Activated naive CD8-positive, alpha-beta T cell treated with anti-CD3 and anti-CD28 coated beads, Interleukin-2, amount 10 ng/mL, durations not matched to agents 7 days and 5 days (primary cell): ENCODE measurements at regions of chrX and their contacts with region 1.

Region 1: DNA sequence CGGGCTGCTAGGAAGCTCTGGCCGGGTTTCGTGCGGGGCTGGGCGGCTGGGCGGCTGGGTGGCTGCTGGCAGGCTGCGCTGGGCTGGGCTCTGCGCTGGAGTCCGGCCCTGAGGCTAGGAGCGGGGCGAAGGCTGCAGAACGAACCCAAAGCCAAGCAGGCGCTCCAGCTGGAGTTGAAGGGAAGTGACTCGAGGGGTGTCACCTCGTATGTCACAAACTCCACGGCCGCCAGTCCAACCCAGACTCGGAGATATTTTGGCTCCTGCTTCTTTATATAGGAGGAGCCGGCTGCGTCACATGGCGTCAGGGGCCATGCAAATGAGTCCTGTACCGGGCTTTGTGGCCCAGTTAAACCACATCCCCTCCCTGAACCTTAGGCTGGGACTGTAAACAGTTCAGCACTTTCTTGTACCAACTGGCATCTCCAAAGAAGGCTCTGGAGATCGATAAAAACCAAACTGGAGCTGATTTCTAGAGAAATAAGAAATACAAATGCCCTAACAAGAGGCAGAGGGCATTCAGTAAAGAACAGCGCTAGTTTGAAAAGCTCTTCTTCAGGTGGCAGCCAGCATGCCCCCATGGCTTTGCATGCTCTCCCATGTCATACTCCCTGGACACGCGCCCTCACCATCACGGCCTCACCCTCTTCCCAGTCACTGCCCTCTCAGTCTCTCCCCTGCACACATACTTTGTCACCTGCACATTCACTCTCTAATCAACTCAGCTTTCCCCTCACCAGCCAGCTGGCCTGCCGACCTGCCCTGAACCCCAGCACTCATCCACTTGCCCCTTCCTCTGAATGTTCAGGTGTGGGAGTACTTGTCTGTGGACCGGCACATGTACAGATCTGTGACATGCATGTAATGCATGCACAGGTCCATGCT is 58.5 kb downstream of the TSC22D3 start:
- DNase-seq: peak; percentile 81
- ATAC-seq: peak; percentile 81
- H3K4me3 Mint-ChIP-seq: peak overlapping the region; percentile 92
- H3K27ac Mint-ChIP-seq: peak overlapping the region; percentile 89
- H3K4me1 Mint-ChIP-seq: peaks cover 25% of the 10 kb centered on the region
- H3K27me3 Mint-ChIP-seq: no peaks in the 10 kb centered on the region

Region 2: DNA sequence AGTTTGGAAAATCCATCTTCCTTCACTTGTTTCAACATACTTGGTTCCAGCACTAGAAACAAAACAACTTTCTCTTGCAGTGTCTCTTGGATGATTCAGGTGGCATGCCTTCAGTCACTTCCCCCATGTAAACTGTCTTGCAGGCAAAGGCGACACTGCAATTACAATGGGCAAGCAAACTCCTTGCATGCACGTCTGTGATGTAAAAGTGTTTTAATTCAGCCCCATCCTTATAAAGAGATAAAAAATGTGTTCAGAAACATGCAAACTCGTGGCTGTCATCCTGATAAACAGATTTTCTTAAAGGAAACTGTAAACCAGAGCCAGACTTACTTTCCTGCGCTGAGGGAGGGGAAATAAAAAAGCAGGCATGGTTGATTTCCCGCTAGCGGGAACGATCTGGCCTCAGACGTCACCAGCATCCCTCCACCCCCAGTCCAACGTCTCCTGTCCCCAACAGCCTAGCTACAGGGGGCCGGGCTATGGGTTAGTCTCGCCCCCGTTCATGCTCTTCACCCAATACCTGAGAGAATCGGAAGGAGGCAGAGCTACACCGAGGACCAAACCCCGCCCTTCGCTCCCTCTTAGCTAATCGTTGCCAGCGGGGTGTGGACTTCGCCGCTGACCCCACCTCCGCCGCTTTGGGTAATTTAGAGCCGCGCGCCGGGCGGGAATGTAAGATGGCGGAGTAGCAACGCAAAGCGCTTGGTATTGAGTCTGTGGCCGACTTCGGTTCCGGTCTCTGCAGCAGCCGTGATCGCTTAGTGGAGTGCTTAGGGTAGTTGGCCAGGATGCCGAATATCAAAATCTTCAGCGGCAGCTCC is 89.0 kb before region 1 on chrX and contains the start of gene PRPS1:
- POLR2A ChIA-PET with region 1: interaction called, 14 read pairs
- DNase-seq: peak; percentile 82
- ATAC-seq: peak; percentile 99
- H3K4me3 Mint-ChIP-seq: peak within 1 kb of the TSS; percentile 91
- H3K27ac Mint-ChIP-seq: peak within 1 kb of the TSS; percentile 90
- H3K4me1 Mint-ChIP-seq: peaks cover 17% of the 10 kb centered on the region
- H3K27me3 Mint-ChIP-seq: no peaks in the 10 kb centered on the region
- total RNA-seq, gene PRPS1: 62.0 to 69.2 TPM

Region 3: DNA sequence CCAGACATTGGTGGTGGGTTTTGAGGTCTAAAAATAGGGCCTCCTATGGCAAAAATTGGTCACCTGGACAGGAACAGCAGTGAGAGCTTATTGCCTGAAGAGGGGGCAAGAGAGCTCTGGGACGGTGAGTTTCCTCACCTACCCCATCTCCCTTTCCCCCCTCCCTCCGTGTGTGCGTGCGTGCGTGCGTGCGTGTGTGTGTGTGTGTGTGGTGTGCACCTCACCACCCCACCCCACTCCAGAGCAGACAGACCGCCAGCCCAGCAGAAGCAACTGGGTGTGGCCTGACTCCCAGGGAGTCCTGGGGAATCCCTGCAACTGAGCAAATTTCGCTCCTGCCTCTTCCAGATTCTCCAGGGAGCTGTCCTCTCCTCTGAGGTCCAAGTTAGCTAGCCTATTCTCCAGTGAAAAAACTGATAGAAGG is 44.1 kb before region 1 on chrX:
- POLR2A ChIA-PET with region 1: interaction called, 317 read pairs
- DNase-seq: peak; percentile 66
- ATAC-seq: peak; percentile 44
- H3K4me3 Mint-ChIP-seq: peak overlapping the region; percentile 74
- H3K27ac Mint-ChIP-seq: peak overlapping the region; percentile 96
- H3K4me1 Mint-ChIP-seq: peaks cover 34% of the 10 kb centered on the region
- H3K27me3 Mint-ChIP-seq: no peaks in the 10 kb centered on the region

Region 4: GRCh38 chrX:107684956-107685385 is 32.1 kb before region 1 on chrX:
- POLR2A ChIA-PET with region 1: interaction called, 317 read pairs
- DNase-seq: peak; percentile 34
- ATAC-seq: peak; percentile 81
- H3K4me3 Mint-ChIP-seq: no peak overlapping the region
- H3K27ac Mint-ChIP-seq: peak overlapping the region; percentile 70
- H3K4me1 Mint-ChIP-seq: peaks cover 29% of the 10 kb centered on the region
- H3K27me3 Mint-ChIP-seq: peaks cover 2% of the 10 kb centered on the region

Region 5: GRCh38 chrX:107729547-107730297 is 12.7 kb after region 1 on chrX:
- POLR2A ChIA-PET with region 1: no interaction called
- DNase-seq: no peak
- ATAC-seq: no peak
- H3K4me3 Mint-ChIP-seq: no peak overlapping the region
- H3K27ac Mint-ChIP-seq: no peak overlapping the region
- H3K4me1 Mint-ChIP-seq: no peaks in the 10 kb centered on the region
- H3K27me3 Mint-ChIP-seq: no peaks in the 10 kb centered on the region

Region 6: GRCh38 chrX:107741404-107741790 is 24.3 kb after region 1 on chrX:
- POLR2A ChIA-PET with region 1: interaction called, 43 read pairs
- DNase-seq: no peak
- ATAC-seq: peak; percentile 3
- H3K4me3 Mint-ChIP-seq: peak overlapping the region; percentile 82
- H3K27ac Mint-ChIP-seq: peak overlapping the region; percentile 100
- H3K4me1 Mint-ChIP-seq: peaks cover 12% of the 10 kb centered on the region
- H3K27me3 Mint-ChIP-seq: no peaks in the 10 kb centered on the region

Region 7: DNA sequence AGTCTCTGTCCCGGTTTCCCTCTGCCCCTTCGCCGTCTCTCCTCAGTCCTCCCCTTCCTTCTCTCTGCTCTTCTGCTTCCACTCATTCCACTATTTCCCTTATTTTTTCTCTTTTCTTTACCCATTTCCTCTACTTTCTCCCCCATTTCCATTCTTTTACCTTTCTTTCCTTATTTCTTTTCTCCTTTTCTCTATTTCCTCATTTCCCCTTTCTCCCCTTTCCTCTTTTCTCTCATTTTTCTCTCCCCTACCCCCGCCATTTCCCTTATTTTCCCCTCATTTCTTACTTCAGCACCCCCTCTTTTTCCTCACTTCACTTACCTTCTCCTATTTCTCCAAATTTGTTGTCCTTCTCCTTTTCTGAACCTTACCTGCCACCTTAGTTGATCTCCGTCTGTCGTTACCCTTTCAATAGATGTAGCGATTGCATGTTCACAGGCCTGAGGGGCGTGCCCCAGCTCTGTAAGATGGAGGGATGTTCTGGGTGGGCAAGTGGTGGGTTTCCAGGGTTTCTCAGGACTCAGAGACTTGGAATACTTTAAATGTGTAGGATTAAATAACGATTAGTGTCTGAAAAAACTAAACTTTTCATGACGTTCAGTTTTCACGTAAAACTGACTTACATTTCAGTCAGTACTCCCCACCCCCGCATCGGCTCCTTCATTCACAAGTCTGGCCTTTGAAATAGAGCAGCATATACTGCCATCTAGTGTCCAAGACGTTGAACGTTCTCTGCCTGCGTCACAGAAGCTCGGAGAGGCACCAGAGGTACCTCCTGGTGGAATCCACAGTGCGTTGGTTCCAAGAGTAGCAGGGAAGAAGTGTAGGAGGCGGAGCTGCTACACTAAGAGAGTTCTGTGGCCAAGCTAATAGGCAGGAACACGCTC is 59.8 kb after region 1 on chrX:
- POLR2A ChIA-PET with region 1: interaction called, 14 read pairs
- DNase-seq: peak; percentile 47
- ATAC-seq: peak; percentile 75
- H3K4me3 Mint-ChIP-seq: peak overlapping the region; percentile 89
- H3K27ac Mint-ChIP-seq: peak overlapping the region; percentile 87
- H3K4me1 Mint-ChIP-seq: peaks cover 9% of the 10 kb centered on the region
- H3K27me3 Mint-ChIP-seq: peaks cover 10% of the 10 kb centered on the region